K562 (cell line): ENCODE measurements at regions of chr12 and their contacts with region 1.

Region 1: DNA sequence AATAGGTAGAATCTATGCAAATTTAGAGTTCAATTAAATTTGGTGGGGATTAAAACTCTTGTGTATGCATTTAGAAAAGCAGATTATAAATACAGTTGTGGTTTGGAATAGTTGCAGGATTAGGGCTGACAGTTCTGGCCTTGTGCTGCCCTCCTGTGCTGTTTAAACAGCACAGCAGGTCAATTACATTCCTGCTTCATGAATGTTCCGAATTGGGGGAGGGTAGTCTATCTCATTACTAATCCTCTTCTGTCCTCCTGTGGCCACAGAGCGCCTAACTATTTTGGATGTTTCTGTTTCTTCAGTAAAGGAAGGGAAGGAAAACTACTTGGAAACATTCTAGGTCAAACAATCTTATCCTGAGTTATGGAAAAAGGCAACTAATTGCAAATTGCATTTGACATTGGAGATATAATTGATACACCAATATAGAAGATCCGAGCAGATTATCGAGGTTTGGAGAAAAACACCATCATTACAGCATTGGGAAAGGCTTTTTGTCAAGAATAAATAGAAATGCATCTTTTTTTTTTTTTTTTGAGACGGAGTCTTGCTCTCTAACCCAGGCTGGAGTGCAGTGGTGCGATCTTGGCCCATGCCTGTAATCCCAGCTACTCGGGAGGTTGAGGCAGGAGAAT is 8.7 kb upstream of the GPR19 start:
- DNase-seq: peak; percentile 67 to 84 (median 72)
- ATAC-seq: peak; percentile 99
- H3K4me3 ChIP-seq: no peak overlapping the region
- H3K27ac ChIP-seq: no peak overlapping the region
- H3K4me1 ChIP-seq: peaks cover 3 to 6% of the 10 kb centered on the region in 2 experiments; a peak in 2 of 5 replicates
- H3K27me3 ChIP-seq: no peaks in the 10 kb centered on the region
- CTCF ChIP-seq: peak; percentile 92 to 99 (median 97)
- EP300 ChIP-seq: peak; percentile 16; the same call in 1 of the 2 replicates
- POLR2A ChIP-seq: no peak
- RAD21 ChIP-seq: peak; percentile 97 to 98

Region 2: DNA sequence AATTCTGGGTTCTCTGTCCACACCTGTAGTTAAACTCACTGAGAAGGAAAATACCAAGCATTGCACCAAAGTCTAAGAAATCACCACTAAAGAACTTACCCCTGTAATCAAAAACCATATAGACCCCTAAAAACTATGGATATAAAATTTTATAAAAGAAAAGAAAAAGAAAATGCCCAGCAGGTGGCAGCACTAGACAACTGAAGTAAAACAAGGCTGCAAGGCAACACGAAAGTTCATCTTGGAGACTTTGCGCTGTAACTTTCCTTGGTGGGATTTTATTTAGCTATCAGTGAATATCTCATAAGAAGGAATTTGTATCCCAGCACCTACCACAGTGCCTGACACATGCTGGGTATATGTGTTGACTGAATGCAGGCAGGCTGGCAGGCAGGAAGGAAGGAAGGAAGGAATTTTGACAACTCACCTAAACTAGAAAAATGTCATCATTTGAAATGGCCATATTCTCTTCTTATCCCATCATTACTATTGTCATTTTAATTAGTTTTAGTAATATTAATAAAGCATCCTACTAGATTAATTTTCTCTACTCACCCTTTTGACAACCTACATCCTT is 1123.4 kb before region 1 on chr12:
- CTCF ChIA-PET with region 1: interaction called, 4 read pairs
- POLR2A ChIA-PET with region 1: no interaction called
- in situ Hi-C with region 1: no loop called
- intact Hi-C with region 1: loop called (anchors 10 kb)
- DNase-seq: peak; percentile 22 to 64 (median 36)
- ATAC-seq: no peak
- H3K4me3 ChIP-seq: no peak overlapping the region
- H3K27ac ChIP-seq: no peak overlapping the region
- H3K4me1 ChIP-seq: no peaks in the 10 kb centered on the region
- H3K27me3 ChIP-seq: no peaks in the 10 kb centered on the region
- CTCF ChIP-seq: peak; percentile 28 to 64 (median 39); a peak in 3 of 6 replicates
- EP300 ChIP-seq: no peak
- POLR2A ChIP-seq: no peak
- RAD21 ChIP-seq: peak; percentile 79 to 82

Region 3: DNA sequence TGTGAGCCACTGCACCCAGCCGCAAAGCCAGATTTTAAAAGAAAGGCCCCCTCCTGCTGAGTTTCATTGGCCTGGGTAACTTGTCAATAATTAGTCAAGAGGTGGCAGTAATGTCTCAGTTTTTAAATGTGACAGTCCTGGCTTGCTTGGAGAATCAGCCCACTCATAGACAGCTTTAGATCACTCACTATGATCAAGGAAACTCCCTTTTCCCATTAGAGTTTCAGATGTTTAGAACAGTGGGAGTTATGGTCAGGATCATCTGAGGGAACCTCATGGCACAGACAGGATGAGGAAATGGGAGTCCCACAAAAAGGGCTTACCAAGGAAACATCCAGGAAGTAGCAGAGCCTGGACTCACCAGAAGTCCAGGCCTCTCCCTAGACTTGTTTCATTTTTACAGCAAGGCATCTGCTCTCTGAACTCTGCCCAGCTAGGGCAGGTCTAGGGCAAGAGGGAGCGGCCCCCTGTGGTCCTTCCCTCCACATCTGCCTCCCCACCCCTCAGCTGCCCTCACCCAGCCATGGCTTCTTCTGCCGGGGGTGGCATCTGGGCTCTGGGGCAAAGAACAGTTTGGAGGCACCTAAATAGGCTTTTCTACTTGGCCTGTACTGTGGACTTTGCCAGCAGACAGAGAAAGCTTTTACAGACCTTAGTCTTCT is 622.7 kb before region 1 on chr12:
- CTCF ChIA-PET with region 1: interaction called, 5 read pairs
- POLR2A ChIA-PET with region 1: no interaction called
- in situ Hi-C with region 1: loop called (anchors 10 kb)
- intact Hi-C with region 1: loop called (anchors 2 kb)
- DNase-seq: peak; percentile 32 to 57 (median 48)
- ATAC-seq: peak; percentile 95
- H3K4me3 ChIP-seq: no peak overlapping the region
- H3K27ac ChIP-seq: peak overlapping the region; percentile 26; the same call in 1 of the 3 replicates
- H3K4me1 ChIP-seq: peaks cover 0 to 4% of the 10 kb centered on the region in 2 experiments; a peak in 3 of 5 replicates
- H3K27me3 ChIP-seq: peaks cover 8 to 18% of the 10 kb centered on the region in 2 experiments; a peak in 3 of 5 replicates
- CTCF ChIP-seq: peak; percentile 50 to 65 (median 54); a peak in 5 of 6 replicates
- EP300 ChIP-seq: no peak
- POLR2A ChIP-seq: no peak
- RAD21 ChIP-seq: peak; percentile 70 to 82

Region 4: DNA sequence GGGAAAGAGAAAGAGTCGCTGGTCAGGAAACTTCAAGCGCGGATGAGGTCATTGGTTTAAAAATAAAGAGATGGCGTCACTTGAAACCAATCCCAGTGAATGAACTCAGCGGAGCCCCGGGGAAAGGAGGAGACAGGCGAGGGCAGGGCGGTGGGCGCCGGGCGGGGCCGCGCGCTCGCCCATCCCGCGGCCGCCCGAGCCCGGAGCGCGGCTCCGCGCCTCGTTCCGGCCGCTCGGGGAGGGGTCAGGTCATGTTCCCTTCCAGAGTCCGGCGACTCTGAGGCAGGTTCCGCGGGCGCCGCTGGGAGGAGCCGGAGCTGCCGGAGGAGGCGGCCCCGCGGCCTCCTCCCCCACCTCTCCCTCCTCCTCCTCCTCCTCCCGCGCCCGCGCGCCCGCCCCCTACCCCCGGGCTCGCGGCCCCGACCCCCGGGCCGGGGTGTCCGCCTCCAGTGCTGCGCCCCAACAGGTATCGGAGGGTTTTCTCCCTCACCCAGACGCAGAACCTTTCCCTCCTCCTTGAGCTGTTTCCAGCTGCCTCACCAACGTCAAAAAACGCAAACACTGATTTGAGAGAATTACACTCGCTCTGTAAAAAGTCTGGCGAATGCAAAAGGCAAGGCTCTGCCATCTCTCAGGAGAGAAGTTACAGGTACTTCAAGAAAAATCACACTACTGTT is 142.0 kb before region 1 on chr12 and contains the start of gene DUSP16:
- CTCF ChIA-PET with region 1: no interaction called
- POLR2A ChIA-PET with region 1: interaction called, 3 read pairs
- in situ Hi-C with region 1: no loop called
- intact Hi-C with region 1: loop called (anchors 5 kb)
- DNase-seq: peak; percentile 81 to 90 (median 84)
- ATAC-seq: peak; percentile 94
- H3K4me3 ChIP-seq: peak within 1 kb of the TSS; percentile 82
- H3K27ac ChIP-seq: peak within 1 kb of the TSS; percentile 97
- H3K4me1 ChIP-seq: peaks cover 9 to 11% of the 10 kb centered on the region in 2 experiments; a peak in 4 of 5 replicates
- H3K27me3 ChIP-seq: no peaks in the 10 kb centered on the region
- CTCF ChIP-seq: peak in 1 of 3 experiments; percentile 27; a peak in 2 of 6 replicates
- EP300 ChIP-seq: no peak
- POLR2A ChIP-seq: no peak
- RAD21 ChIP-seq: no peak
- polyA plus RNA-seq, gene DUSP16: 0.70 to 1.1 TPM

Region 5: DNA sequence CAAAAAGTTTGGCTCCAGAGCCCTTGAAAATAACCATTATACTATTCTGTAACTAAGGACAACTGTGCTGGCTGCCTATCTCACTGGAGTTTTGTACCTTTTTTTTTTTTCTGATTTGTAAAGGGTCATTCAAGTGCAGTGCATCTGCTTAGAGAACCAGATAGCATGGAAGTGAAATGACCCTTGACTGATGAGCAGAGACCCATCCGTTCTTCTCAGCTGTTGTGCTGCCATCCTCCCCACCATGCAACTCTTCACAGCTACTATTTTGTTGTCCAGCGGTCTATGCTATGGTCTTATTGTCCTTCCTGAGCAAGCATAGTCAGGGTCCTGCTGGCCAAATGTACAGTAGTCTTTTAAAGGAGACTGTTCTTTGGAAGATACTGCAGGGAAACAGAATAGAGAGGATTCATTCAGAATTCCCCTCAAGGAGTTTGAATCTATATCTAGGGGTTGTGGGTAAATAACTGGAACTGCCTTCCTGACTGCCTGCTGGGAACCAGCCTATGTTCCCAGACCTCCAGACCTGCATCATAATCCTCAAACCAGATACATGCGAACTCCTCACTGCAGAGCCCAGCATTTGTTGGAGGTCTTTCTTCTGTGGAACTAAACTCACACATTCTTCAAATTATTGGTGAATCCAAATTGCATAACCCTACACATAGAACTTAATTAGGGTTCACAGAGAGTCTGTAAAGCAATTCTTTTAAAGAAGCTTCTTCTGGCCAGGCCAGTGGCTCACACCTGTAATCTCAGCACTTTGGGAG is 49.8 kb before region 1 on chr12:
- CTCF ChIA-PET with region 1: no interaction called
- POLR2A ChIA-PET with region 1: no interaction called
- in situ Hi-C with region 1: no loop called
- intact Hi-C with region 1: loop called (anchors 5 kb)
- DNase-seq: no peak
- ATAC-seq: no peak
- H3K4me3 ChIP-seq: no peak overlapping the region
- H3K27ac ChIP-seq: no peak overlapping the region
- H3K4me1 ChIP-seq: no peaks in the 10 kb centered on the region; a peak in 1 of 5 replicates
- H3K27me3 ChIP-seq: no peaks in the 10 kb centered on the region
- CTCF ChIP-seq: no peak
- EP300 ChIP-seq: no peak
- POLR2A ChIP-seq: no peak
- RAD21 ChIP-seq: no peak